Endothelial cell of umbilical vein (primary cell): ENCODE measurements at regions of chr10 and their contacts with region 1.

Region 1: DNA sequence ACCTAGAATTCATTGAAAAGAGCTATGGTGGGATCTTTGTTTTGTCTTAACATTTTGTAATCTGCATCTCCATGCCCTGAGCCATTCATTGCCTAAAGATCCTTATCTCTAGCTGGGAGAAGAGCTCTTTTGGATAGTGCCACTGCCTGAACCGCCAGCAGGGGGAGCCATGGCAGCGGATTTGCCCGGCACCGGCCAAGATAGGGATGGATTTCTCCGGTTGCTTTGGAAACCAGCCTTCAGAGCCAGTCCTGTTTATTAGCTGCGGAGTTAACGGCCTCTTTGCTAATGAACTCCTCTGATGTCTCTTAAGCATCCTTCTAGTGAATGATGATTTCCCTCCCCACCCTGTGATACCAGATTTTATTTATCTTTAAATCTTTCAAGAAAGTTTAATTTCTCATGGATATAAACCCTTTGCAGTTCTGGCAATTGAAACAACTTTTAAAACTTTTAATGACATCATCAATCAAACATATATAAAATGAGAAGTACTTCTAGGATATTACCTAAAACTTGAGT is 58.2 kb upstream of the LYZL2 start:
- DNase-seq: peak; percentile 82
- H3K4me3 ChIP-seq: no peak overlapping the region
- H3K27ac ChIP-seq: no peak overlapping the region
- H3K4me1 ChIP-seq: peaks cover 2% of the 10 kb centered on the region
- H3K27me3 ChIP-seq: peaks cover 6 to 10% of the 10 kb centered on the region in 2 experiments
- CTCF ChIP-seq: peak; percentile 92
- POLR2A ChIP-seq: no peak

Region 2: DNA sequence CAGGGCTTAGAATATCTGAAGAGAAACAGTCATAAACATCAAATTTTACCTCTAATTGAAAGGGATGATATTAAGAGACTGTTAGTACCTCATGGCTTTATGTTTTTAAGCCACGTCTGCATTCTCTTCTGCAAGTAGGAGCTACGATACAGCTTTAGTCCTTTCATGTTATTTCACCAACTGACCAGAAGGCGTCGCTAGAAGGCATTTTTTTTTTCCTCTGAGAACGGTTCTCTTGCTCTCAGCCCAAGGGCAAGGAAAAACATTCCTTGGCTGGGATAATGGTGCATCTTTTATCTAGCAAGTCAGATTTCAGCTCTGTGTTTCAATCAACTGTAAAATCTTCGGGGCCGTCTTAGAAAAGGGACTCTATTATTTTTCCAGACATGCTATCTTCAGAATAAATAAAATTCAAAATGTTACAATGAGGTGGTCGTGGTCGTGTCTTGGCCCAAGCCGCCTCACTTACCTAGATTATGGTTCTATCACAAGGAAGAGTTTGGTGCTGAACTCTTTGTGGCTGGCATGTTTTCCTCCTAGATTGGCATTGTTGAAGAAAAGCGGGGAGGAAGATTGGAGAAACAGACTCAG is 16.6 kb before region 1 on chr10:
- CTCF ChIA-PET with region 1: interaction called, 20 read pairs
- POLR2A ChIA-PET with region 1: no interaction called
- dilution Hi-C with region 1: no loop called
- intact Hi-C with region 1: no loop called
- DNase-seq: peak; percentile 90
- H3K4me3 ChIP-seq: peak overlapping the region in 1 of 3 experiments; percentile 44
- H3K27ac ChIP-seq: no peak overlapping the region
- H3K4me1 ChIP-seq: peaks cover 15% of the 10 kb centered on the region
- H3K27me3 ChIP-seq: no peaks in the 10 kb centered on the region
- CTCF ChIP-seq: peak; percentile 62
- POLR2A ChIP-seq: no peak

Region 3: GRCh38 chr10:30709229-30709628 is 21.5 kb after region 1 on chr10:
- CTCF ChIA-PET with region 1: interaction called, 14 read pairs
- POLR2A ChIA-PET with region 1: no interaction called
- dilution Hi-C with region 1: no loop called
- intact Hi-C with region 1: no loop called
- DNase-seq: no peak
- H3K4me3 ChIP-seq: no peak overlapping the region
- H3K27ac ChIP-seq: no peak overlapping the region
- H3K4me1 ChIP-seq: no peaks in the 10 kb centered on the region
- H3K27me3 ChIP-seq: peaks cover 4 to 12% of the 10 kb centered on the region in 2 experiments
- CTCF ChIP-seq: peak in 1 of 2 donors; percentile 11
- POLR2A ChIP-seq: no peak

Region 4: DNA sequence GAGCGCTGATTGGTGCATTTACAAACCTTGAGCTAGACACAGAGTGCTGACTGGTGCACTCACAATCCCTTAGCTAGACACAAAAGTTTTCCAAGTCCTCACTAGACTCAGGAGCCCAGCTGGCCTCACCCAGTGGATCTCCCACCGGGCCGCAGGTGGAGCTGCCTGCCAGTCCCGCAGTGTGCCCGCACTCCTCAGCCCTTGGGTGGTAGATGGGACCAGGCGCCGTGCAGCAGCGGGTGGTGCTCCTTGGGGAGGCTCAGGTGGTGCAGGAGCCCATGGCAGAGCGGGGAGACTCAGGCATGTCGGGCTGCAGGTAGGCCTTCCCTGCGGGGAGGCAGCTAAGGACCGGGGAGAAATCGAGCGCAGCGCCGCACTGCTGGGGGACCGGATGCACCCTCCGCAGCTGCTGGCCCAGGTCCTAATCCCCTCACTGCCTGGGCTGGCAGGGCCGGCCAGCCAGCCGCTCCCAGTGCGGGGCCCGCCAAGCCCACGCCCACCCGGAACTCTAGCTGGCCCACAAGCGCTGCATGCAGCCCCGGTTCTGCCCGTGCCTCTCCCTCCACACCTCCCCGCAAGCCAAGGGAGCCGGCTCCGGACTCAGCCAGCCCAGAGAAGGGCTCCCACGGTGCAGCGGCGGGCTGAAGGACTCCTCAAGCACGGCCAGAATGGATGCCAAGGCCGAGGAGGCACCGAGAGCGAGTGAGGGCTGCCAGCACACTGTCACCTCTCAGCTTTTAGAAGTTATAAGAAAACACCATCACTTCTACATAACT is 215.1 kb after region 1 on chr10:
- CTCF ChIA-PET with region 1: no interaction called
- POLR2A ChIA-PET with region 1: no interaction called
- dilution Hi-C with region 1: no loop called
- intact Hi-C with region 1: no loop called
- DNase-seq: no peak
- H3K4me3 ChIP-seq: no peak overlapping the region
- H3K27ac ChIP-seq: no peak overlapping the region
- H3K4me1 ChIP-seq: no peaks in the 10 kb centered on the region
- H3K27me3 ChIP-seq: no peaks in the 10 kb centered on the region
- CTCF ChIP-seq: no peak
- POLR2A ChIP-seq: no peak

Region 5: GRCh38 chr10:31707093-31708039 is 1019.6 kb after region 1 on chr10:
- CTCF ChIA-PET with region 1: interaction called, 3 read pairs
- POLR2A ChIA-PET with region 1: no interaction called
- dilution Hi-C with region 1: no loop called
- intact Hi-C with region 1: loop called (anchors 1 kb)
- DNase-seq: peak; percentile 96
- H3K4me3 ChIP-seq: peak overlapping the region in 1 of 3 experiments; percentile 16
- H3K27ac ChIP-seq: peak overlapping the region; percentile 98
- H3K4me1 ChIP-seq: peaks cover 45% of the 10 kb centered on the region
- H3K27me3 ChIP-seq: no peaks in the 10 kb centered on the region
- CTCF ChIP-seq: no peak
- POLR2A ChIP-seq: no peak